HEK293 (cell line): ENCODE measurements at regions of chr3 and their contacts with region 1.

Region 1: GRCh38 chr3:149879872-149880271 is 66.9 kb downstream of the RNF13 start:
- H3K4me3 ChIP-seq: no peak overlapping the region
- H3K27ac ChIP-seq: no peak overlapping the region
- H3K4me1 ChIP-seq: no peaks in the 10 kb centered on the region
- CTCF ChIP-seq: no peak

Region 2: DNA sequence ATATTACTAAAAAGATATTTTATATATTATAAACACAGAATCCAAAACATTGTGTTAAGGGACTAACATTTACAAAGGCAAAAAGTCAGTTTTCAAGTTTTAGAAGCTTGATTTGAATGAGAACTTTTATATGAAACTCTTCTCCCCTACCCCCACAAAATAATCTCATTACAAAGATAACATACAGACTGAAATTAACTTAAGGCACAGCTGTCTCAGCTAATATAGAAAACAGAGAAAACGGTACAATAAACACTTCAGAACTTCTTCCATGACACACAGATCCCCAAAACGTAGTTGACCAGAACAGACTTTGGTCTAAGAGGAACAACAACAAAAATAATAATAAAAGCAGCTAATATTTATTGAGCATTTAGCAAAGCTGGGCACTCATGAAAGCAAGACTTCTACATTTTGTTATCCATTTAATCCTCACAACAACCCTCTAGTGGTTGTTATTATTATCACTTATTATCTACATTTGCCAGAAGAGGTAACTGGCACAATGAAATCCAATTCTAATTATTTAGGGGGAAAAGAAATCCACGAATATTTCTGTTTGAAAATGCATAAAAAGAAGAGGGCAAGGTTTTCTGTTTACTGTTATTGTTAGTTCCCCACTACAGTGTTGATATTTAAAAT is 22.7 kb after region 1 on chr3:
- CTCF ChIA-PET with region 1: interaction called, 15 read pairs
- POLR2A ChIA-PET with region 1: no interaction called
- H3K4me3 ChIP-seq: no peak overlapping the region
- H3K27ac ChIP-seq: no peak overlapping the region
- H3K4me1 ChIP-seq: no peaks in the 10 kb centered on the region
- CTCF ChIP-seq: no peak

Region 3: DNA sequence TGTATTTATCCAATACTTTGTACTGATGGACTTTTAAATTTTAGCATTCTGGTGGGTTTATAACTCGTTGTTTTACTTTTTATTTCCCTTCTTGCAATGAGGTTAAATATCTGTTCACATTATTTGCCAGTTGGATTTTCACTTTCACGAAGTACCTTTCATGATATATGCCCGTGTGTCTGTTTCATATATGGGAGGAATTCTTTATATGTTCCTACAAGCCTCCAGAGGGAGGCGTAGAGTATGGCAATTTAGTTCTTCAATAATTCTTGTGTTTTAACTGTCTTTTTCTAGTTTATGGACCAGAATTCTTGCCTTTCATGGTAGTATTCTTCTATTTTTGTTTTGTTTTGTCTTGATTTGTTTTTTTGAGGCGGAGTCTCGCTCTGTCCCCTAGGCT is 46.0 kb after region 1 on chr3:
- CTCF ChIA-PET with region 1: no interaction called
- POLR2A ChIA-PET with region 1: no interaction called
- H3K4me3 ChIP-seq: no peak overlapping the region
- H3K27ac ChIP-seq: no peak overlapping the region
- H3K4me1 ChIP-seq: no peaks in the 10 kb centered on the region
- CTCF ChIP-seq: no peak